Motor neuron (in vitro differentiated cells): ENCODE measurements at regions of chr4 and their contacts with region 1.

Region 1: DNA sequence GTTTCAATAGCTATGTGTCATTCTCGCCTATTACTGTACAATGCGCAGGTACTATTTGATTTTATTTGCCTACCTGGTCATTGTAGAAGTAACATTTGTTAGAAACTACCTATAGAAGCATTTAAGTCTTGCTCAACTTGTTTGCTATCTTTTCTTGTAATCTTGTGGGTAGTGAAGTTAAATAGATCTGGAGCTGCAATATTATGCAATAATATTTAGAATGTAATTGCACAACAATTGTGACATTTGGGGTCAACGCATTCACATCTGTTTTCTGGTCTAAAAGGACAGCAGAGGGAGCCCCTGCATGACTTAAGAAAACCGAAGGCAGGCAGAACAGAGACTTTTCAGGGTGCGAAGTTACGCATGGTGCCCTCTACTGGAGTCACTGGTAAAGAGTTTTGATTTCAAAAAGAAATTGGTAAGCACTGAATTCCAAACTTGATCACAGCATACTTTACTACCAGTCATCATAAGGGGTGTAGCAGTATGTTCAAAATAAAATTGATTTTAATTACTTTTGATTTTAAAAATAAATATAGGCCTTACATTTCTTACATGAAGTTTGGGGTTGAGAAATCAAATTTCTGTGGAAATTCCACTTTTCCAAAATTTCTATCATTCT is 503.2 kb upstream of the FAM241A start:
- ATAC-seq: peak; percentile 40 to 93 (median 75)
- H3K4me3 ChIP-seq: no peak overlapping the region
- H3K27ac ChIP-seq: no peak overlapping the region
- H3K4me1 ChIP-seq: no peaks in the 10 kb centered on the region

Region 2: GRCh38 chr4:109998867-109999584 is 1643.0 kb before region 1 on chr4:
- in situ Hi-C with region 1: loop called in 2 of 9 experiments (anchors 25 kb)
- ATAC-seq: peak in 7 of 8 experiments; percentile 34 to 81 (median 67)
- H3K4me3 ChIP-seq: no peak overlapping the region
- H3K27ac ChIP-seq: no peak overlapping the region
- H3K4me1 ChIP-seq: no peaks in the 10 kb centered on the region

Region 3: DNA sequence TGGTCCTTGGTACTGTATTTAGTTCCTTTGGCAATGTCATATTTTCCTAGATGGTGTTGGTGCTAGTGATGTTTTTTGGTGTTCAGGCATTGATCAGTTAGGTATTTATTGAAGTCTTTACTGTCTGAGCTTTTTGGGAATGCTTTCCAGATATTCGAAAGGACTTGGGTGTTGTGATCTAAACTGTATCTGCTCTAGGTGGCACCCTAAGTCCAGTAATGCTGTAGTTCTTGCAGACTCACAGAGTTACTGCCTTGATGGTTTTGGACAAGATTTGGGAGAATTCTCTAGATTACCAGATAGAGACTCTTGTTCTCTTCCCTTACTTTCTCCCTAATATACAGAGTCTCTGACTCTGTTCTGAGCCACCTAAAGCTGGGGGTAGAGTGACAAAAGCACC is 505.6 kb before region 1 on chr4:
- in situ Hi-C with region 1: loop called in 2 of 9 experiments (anchors 10 to 25 kb)
- ATAC-seq: peak in 3 of 8 experiments; percentile 57 to 82 (median 69)
- H3K4me3 ChIP-seq: no peak overlapping the region
- H3K27ac ChIP-seq: no peak overlapping the region
- H3K4me1 ChIP-seq: no peaks in the 10 kb centered on the region

Region 4: GRCh38 chr4:112031712-112032328 is 389.8 kb after region 1 on chr4:
- in situ Hi-C with region 1: loop called in 5 of 9 experiments (anchors 10 to 25 kb)
- ATAC-seq: peak in 4 of 8 experiments; percentile 63 to 83 (median 70)
- H3K4me3 ChIP-seq: no peak overlapping the region
- H3K27ac ChIP-seq: no peak overlapping the region
- H3K4me1 ChIP-seq: no peaks in the 10 kb centered on the region